Breast epithelium (tissue), 4 donors: ENCODE measurements at regions of chr11 and their contacts with region 1.

Region 1: DNA sequence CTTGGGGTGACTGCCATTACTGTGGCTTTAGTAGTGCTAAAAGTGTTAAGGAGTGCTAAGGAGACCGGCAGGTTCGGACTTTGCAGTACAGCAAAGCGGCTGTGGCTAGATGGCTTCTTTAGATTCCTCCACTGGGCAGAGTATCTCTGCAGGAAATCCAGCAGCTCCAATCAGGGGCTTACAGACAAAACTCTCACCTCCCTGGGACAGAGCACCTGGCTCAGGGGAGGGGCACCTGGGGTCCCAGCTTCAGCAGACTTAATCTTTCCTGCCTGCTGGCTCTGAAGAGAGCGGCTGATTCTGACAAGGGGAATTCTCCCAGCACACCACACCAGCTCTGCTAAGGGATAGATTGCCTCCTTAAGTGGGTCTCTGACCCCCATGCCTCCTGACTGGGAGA is 668.8 kb upstream of the TENM4 start:
- DNase-seq: no peak
- H3K4me3 ChIP-seq: no peak overlapping the region
- H3K27ac ChIP-seq: no peak overlapping the region
- H3K4me1 ChIP-seq: no peaks in the 10 kb centered on the region
- H3K27me3 ChIP-seq: no peaks in the 10 kb centered on the region
- CTCF ChIP-seq: no peak
- POLR2A ChIP-seq: no peak

Region 2: DNA sequence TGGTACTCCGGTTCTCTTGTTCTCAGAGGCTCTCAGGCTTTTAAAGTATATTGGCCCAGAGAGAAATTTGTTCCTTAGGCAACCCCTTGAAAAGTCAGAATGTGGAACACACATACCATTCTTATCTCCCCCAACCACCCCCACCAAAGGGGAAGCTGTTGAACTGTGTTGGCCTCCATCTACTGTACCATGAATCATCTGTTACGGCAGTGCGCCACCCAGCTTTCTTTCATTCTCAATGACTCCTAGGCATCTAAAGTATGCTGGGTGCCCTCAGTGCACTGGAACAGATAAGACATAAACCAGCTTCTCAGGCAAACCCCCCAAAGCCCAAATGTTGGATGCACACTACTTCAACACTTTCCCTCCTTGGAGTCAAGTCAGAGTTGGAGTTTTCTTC is 27.3 kb after region 1 on chr11:
- intact Hi-C with region 1: loop called (anchors 2 kb)
- DNase-seq: no peak
- H3K4me3 ChIP-seq: no peak overlapping the region
- H3K27ac ChIP-seq: no peak overlapping the region
- H3K4me1 ChIP-seq: no peaks in the 10 kb centered on the region
- H3K27me3 ChIP-seq: no peaks in the 10 kb centered on the region
- CTCF ChIP-seq: no peak
- POLR2A ChIP-seq: no peak